ENCODE measurements at regions of chr11 and their contacts with region 1.

Region 1: DNA sequence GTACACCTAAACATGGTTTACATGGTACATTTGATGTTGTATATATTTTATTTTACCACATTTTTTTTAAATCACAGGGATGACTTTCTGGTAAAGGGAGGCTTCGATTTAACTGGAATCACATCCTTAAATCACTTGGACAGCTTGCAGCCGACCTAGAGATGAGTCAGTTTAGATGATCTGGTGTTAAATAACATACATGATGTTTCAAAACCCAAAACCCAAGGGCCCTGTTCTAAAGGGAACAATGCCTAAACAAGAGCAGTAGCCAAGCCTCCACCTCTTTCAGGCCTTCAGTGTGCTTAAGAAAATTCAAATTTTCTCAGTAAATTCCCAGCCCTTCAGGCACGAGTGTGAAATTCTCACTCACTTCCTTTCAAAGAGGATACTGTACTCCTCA is 108.8 kb downstream of the WT1 start:
- DNase-seq: no peak
- ATAC-seq: no peak
- H3K4me3 ChIP-seq: no peak overlapping the region
- H3K27ac ChIP-seq: no peak overlapping the region
- H3K4me1 ChIP-seq: no peaks in the 10 kb centered on the region
- H3K27me3 ChIP-seq: no peaks in the 10 kb centered on the region; the same call in 1 of the 2 replicates
- CTCF ChIP-seq: no peak
- POLR2A ChIP-seq: no peak
- RAD21 ChIP-seq: no peak

Region 2: DNA sequence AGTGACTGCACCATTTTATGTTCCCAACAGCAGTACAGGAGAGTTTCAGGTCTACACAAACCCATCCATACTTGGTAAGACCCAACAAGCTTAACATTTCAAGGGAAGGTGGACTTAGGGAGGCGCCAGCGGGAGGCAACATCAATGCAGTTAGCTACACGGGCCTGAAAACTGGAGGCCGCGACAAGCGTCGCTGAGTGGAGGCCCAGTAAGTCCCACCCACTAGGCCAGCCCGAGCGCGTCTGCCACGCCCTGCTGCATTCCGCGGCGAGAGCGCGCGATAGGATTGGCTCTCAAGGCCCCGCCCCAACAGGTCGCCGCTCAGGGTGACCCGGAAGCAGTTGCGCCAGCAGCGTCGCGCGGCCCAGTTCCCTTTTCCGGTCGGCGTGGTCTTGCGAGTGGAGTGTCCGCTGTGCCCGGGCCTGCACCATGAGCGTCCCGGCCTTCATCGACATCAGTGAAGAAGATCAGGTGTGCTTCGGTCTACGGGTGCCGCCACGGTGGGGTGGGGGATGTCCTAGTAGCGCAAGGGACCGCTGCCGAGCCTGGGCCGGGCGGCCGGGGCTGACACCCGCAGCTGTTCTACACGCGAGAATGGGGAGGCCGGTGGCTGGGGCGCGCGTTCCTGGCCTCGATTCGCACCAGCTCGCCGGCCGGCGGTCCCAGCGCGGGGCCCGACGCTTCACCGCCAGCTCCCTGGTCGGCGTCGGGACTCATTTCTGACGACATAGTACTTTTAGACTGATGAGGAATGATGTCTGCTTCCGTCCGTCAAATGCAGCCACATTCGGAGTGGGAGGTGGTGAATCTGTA is 257.1 kb after region 1 on chr11 and contains the start of gene EIF3M:
- CTCF ChIA-PET with region 1: no interaction called
- POLR2A ChIA-PET with region 1: no interaction called
- dilution Hi-C with region 1: no loop called
- in situ Hi-C with region 1: no loop called
- intact Hi-C with region 1: loop called (anchors 10 kb)
- DNase-seq: peak; percentile 94
- ATAC-seq: peak; percentile 99
- H3K4me3 ChIP-seq: peak within 1 kb of the TSS; percentile 75
- H3K27ac ChIP-seq: peak within 1 kb of the TSS; percentile 88
- H3K4me1 ChIP-seq: no peaks in the 10 kb centered on the region
- H3K27me3 ChIP-seq: no peaks in the 10 kb centered on the region
- CTCF ChIP-seq: no peak
- POLR2A ChIP-seq: peak; percentile 78
- RAD21 ChIP-seq: no peak
- total RNA-seq, gene EIF3M: 466 and 781 TPM in 2 replicates

Region 3: GRCh38 chr11:32615422-32615821 is 288.9 kb after region 1 on chr11:
- CTCF ChIA-PET with region 1: no interaction called
- POLR2A ChIA-PET with region 1: no interaction called
- dilution Hi-C with region 1: no loop called
- in situ Hi-C with region 1: no loop called
- intact Hi-C with region 1: loop called (anchors 1 kb)
- DNase-seq: no peak
- ATAC-seq: no peak
- H3K4me3 ChIP-seq: no peak overlapping the region
- H3K27ac ChIP-seq: no peak overlapping the region
- H3K4me1 ChIP-seq: no peaks in the 10 kb centered on the region
- H3K27me3 ChIP-seq: no peaks in the 10 kb centered on the region
- CTCF ChIP-seq: peak; percentile 26; the same call in 1 of the 2 replicates
- POLR2A ChIP-seq: no peak
- RAD21 ChIP-seq: no peak; the same call in 1 of the 2 replicates

Region 4: GRCh38 chr11:32786811-32787210 is 460.3 kb after region 1 on chr11:
- CTCF ChIA-PET with region 1: no interaction called
- POLR2A ChIA-PET with region 1: no interaction called
- dilution Hi-C with region 1: no loop called
- in situ Hi-C with region 1: loop called (anchors 10 kb)
- intact Hi-C with region 1: no loop called
- DNase-seq: no peak
- ATAC-seq: no peak
- H3K4me3 ChIP-seq: no peak overlapping the region
- H3K27ac ChIP-seq: no peak overlapping the region
- H3K4me1 ChIP-seq: no peaks in the 10 kb centered on the region
- H3K27me3 ChIP-seq: peaks cover 2% of the 10 kb centered on the region; the same call in 1 of the 2 replicates
- CTCF ChIP-seq: no peak
- POLR2A ChIP-seq: no peak
- RAD21 ChIP-seq: no peak

Region 5: DNA sequence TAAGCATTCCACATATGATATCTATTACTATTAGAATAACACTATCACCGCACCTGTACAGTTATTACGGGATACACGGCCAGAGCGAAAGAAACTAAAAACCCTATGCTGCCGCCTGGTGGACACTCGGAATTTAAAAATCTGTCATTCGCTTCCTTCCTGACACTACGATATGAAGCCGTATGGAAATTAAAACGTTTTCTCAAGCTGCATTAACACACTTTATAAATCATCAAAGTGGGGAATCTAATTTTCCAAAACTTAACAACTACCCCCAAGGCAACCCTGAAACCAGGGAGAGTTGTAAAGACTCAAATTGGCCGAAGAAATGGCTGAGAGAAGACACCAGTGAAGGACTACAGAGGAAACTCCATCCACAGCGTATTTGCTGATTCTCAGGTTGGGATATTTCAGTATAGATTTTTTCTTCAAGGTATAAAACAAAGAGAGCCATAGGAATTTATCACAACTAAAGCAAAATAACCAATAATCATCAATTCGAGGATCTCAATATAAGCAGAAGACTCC is 466.5 kb after region 1 on chr11:
- CTCF ChIA-PET with region 1: interaction called, 5 read pairs
- POLR2A ChIA-PET with region 1: no interaction called
- dilution Hi-C with region 1: no loop called
- in situ Hi-C with region 1: loop called (anchors 10 kb)
- intact Hi-C with region 1: loop called (anchors 1 kb)
- DNase-seq: peak; percentile 27
- ATAC-seq: peak; percentile 87
- H3K4me3 ChIP-seq: no peak overlapping the region
- H3K27ac ChIP-seq: no peak overlapping the region
- H3K4me1 ChIP-seq: no peaks in the 10 kb centered on the region
- H3K27me3 ChIP-seq: peaks cover 4% of the 10 kb centered on the region; the same call in 1 of the 2 replicates
- CTCF ChIP-seq: peak; percentile 57
- POLR2A ChIP-seq: no peak
- RAD21 ChIP-seq: peak; percentile 50